ENCODE measurements at regions of chr5 and their contacts with region 1.

Region 1: DNA sequence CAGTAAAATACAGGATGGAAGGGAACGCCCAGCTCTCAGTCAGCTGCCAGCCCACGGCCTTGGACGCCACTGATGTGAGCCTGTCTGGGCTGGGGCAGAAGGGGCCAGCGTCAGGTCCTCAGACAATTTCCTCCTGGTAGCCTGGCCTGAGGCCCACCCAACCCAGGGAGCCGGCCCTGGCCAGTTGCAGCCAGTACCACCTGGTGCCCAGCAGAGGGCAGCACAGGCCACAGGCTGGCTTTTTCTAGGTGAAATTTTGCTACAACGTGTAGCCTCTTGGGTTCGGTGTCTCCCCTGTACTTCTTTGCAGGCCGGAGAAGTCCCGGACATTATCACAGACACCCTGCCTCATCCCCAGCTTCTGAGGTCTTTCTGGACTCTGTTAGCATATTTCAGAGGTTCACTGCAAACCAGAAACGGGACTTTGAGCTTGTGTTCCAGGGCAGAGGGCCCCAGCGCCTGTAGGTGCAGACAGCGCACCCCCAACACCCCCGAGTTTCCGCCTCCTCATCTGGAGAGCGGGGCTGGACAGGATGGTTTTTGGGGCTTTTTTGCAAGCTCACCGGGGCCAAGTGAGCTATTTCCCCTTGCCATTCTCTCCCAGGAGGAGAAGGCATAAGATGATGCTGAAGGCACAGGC is 45.9 kb upstream of the KCNMB1 start:
- DNase-seq: peak; percentile 48 to 53
- ATAC-seq: peak; percentile 83 to 95
- H3K4me3 ChIP-seq: no peak overlapping the region
- H3K27ac ChIP-seq: no peak overlapping the region
- H3K4me1 ChIP-seq: no peaks in the 10 kb centered on the region
- CTCF ChIP-seq: peak; percentile 92
- EP300 ChIP-seq: no peak
- POLR2A ChIP-seq: no peak
- RAD21 ChIP-seq: peak; percentile 97 to 98

Region 2: GRCh38 chr5:170420780-170421412 is 14.2 kb before region 1 on chr5:
- CTCF ChIA-PET with region 1: interaction called, 116 read pairs
- POLR2A ChIA-PET with region 1: no interaction called
- DNase-seq: peak; percentile 71 to 79
- ATAC-seq: peak; percentile 71 to 92; a peak in 5 of 6 replicates
- H3K4me3 ChIP-seq: no peak overlapping the region
- H3K27ac ChIP-seq: no peak overlapping the region
- H3K4me1 ChIP-seq: peaks cover 7% of the 10 kb centered on the region; the same call in 2 of the 3 replicates
- CTCF ChIP-seq: peak; percentile 82
- EP300 ChIP-seq: no peak
- POLR2A ChIP-seq: no peak
- RAD21 ChIP-seq: peak; percentile 73 to 74

Region 3: GRCh38 chr5:170565072-170565471 is 130.0 kb after region 1 on chr5:
- CTCF ChIA-PET with region 1: interaction called, 13 read pairs
- POLR2A ChIA-PET with region 1: no interaction called
- DNase-seq: no peak
- ATAC-seq: no peak
- H3K4me3 ChIP-seq: no peak overlapping the region
- H3K27ac ChIP-seq: no peak overlapping the region
- H3K4me1 ChIP-seq: no peaks in the 10 kb centered on the region
- CTCF ChIP-seq: no peak
- EP300 ChIP-seq: no peak
- POLR2A ChIP-seq: no peak
- RAD21 ChIP-seq: no peak

Region 4: GRCh38 chr5:170591054-170591453 is 156.0 kb after region 1 on chr5:
- CTCF ChIA-PET with region 1: interaction called, 66 read pairs
- POLR2A ChIA-PET with region 1: no interaction called
- DNase-seq: peak in 1 of 2 experiments; percentile 15
- ATAC-seq: no peak
- H3K4me3 ChIP-seq: no peak overlapping the region
- H3K27ac ChIP-seq: no peak overlapping the region
- H3K4me1 ChIP-seq: no peaks in the 10 kb centered on the region
- CTCF ChIP-seq: no peak
- EP300 ChIP-seq: no peak
- POLR2A ChIP-seq: no peak
- RAD21 ChIP-seq: no peak

Region 5: GRCh38 chr5:170638454-170639220 is 203.6 kb after region 1 on chr5:
- CTCF ChIA-PET with region 1: interaction called, 508 read pairs
- POLR2A ChIA-PET with region 1: interaction called, 6 read pairs
- DNase-seq: peak; percentile 51 to 82
- ATAC-seq: peak; percentile 83 to 95
- H3K4me3 ChIP-seq: no peak overlapping the region
- H3K27ac ChIP-seq: no peak overlapping the region
- H3K4me1 ChIP-seq: peaks cover 6% of the 10 kb centered on the region
- CTCF ChIP-seq: peak; percentile 87
- EP300 ChIP-seq: no peak
- POLR2A ChIP-seq: no peak
- RAD21 ChIP-seq: peak; percentile 88 to 91